Activated CD4-positive, alpha-beta memory T cell treated with anti-CD3 and anti-CD28 coated beads for 36 hours (primary cell): ENCODE measurements at regions of chr6 and their contacts with region 1.

Region 1: DNA sequence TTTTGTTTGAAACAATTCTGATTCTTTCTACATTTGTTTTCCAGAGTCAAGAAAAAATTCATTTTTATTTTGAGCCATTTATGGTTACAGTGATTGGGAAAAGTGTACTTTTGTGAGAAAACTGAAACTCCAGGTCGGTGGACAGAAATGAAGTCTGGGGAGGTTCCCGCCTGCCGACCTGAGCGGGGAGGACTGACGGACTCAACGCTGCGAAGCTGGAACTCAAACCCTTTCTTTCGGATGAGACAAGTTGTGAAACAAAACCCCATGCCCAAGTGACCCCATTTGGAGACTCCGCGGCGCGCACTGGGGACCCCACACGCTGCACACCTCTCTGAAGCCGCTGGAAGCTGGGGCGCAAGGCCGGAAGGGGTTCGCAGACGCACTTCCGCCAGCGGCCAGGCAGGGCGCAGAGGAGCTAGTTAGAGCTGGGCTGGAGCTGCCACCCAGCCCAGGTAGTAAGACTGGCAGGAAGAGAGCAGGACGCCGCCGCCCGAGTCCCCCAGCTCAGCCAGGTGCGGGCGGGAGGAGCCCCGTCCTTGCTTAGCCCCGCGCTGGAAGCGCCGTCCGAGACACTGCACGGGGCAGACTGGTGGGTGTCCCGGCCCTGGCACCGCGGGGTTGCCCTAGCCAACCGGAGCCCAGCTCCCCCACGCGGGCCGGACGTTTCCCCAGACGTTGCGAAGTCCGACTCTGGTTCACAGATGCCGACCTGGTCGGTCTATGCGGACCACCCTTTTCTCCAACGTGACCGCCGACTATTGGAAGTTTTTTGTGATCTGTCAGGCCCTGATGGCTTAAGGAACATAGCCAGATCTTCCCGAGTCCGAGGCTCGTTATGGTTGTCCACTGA is 19.8 kb upstream of the ZSCAN16 start:
- DNase-seq: peak; percentile 89
- H3K4me3 Mint-ChIP-seq: peak overlapping the region; percentile 80
- H3K27ac Mint-ChIP-seq: peak overlapping the region; percentile 88
- H3K4me1 Mint-ChIP-seq: peaks cover 4% of the 10 kb centered on the region
- H3K27me3 Mint-ChIP-seq: peaks cover 4% of the 10 kb centered on the region

Region 2: GRCh38 chr6:28005124-28005890 is 99.3 kb before region 1 on chr6:
- CTCF ChIA-PET with region 1: no interaction called
- POLR2A ChIA-PET with region 1: no interaction called
- intact Hi-C with region 1: no loop called
- DNase-seq: no peak
- H3K4me3 Mint-ChIP-seq: no peak overlapping the region
- H3K27ac Mint-ChIP-seq: no peak overlapping the region
- H3K4me1 Mint-ChIP-seq: no peaks in the 10 kb centered on the region
- H3K27me3 Mint-ChIP-seq: peaks cover 15% of the 10 kb centered on the region

Region 3: GRCh38 chr6:28124102-28124970 is 19.7 kb after region 1 on chr6 and contains the start of gene ZSCAN16:
- CTCF ChIA-PET with region 1: interaction called, 7 read pairs
- POLR2A ChIA-PET with region 1: interaction called, 8 read pairs
- intact Hi-C with region 1: loop called (anchors 1 kb)
- DNase-seq: peak; percentile 84
- H3K4me3 Mint-ChIP-seq: peak within 1 kb of the TSS; percentile 91
- H3K27ac Mint-ChIP-seq: peak within 1 kb of the TSS; percentile 91
- H3K4me1 Mint-ChIP-seq: peaks cover 34% of the 10 kb centered on the region
- H3K27me3 Mint-ChIP-seq: no peaks in the 10 kb centered on the region
- total RNA-seq, gene ZSCAN16: 2.8 to 3.6 TPM